Psoas muscle (tissue), 8 donors: ENCODE measurements at regions of chr15 and their contacts with region 1.

Region 1: GRCh38 chr15:90886041-90886614 is 1.8 kb downstream of the FES start:
- DNase-seq: peak; percentile 80 to 88
- ATAC-seq: peak; percentile 56 to 81 (median 70)
- H3K4me3 ChIP-seq: peak overlapping the region; percentile 69
- H3K27ac ChIP-seq: no peak overlapping the region
- H3K4me1 ChIP-seq: peaks cover 12% of the 10 kb centered on the region
- H3K27me3 ChIP-seq: no peaks in the 10 kb centered on the region
- CTCF ChIP-seq: peak; percentile 98

Region 2: DNA sequence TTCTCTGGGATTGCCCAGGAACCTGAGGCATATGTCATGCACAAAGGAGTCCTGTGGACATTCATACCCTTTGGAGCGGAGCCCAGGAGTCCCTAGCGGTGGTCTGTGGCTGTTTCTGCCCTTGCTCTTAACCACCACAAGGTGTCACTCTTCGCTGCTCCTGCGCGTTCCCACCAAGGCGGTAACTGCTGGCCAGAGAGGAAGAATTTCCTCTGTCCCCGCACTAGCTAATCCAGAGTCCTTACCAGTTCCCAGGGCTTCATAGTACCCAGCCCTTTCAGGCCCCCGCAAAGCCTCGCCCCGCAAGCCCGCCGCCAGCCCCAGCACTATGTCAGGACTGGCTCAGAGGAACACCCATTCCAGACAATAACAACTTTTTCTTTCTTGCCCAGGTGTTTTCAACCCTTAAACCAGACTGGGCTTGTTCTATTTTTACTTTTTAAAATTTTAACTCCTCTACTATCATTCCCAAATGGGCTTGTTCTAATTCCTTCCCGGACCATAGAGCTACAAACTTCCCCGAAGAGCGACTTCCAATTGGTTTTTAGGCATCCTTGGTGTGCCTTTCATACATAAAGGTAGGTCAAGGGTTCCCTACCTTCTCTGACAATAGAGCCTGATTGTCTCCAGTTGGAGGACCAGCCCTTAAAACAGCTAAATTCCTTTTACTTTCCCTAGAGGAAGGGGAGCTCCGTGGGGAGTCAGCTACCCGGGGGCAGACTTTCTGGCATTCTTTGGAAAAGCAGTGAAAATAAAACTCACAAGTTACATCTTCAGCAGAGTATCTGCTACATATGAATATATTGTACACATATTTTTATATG is 565.9 kb before region 1 on chr15:
- intact Hi-C with region 1: loop called in 1 of 2 experiments (anchors 5 kb)
- DNase-seq: peak; percentile 78 to 90
- ATAC-seq: peak; percentile 90 to 94 (median 92)
- H3K4me3 ChIP-seq: peak overlapping the region; percentile 42
- H3K27ac ChIP-seq: peak overlapping the region; percentile 27
- H3K4me1 ChIP-seq: peaks cover 19% of the 10 kb centered on the region
- H3K27me3 ChIP-seq: no peaks in the 10 kb centered on the region
- CTCF ChIP-seq: peak; percentile 97

Region 3: GRCh38 chr15:90648137-90649070 is 237.7 kb before region 1 on chr15:
- intact Hi-C with region 1: loop called (anchors 1 to 2 kb)
- DNase-seq: peak; percentile 59 to 67
- ATAC-seq: peak; percentile 77 to 86 (median 80)
- H3K4me3 ChIP-seq: no peak overlapping the region
- H3K27ac ChIP-seq: peak overlapping the region; percentile 60
- H3K4me1 ChIP-seq: no peaks in the 10 kb centered on the region
- H3K27me3 ChIP-seq: no peaks in the 10 kb centered on the region
- CTCF ChIP-seq: peak; percentile 94

Region 4: GRCh38 chr15:90697181-90697580 is 188.9 kb before region 1 on chr15:
- intact Hi-C with region 1: loop called in 1 of 2 experiments (anchors 5 kb)
- DNase-seq: no peak
- ATAC-seq: no peak
- H3K4me3 ChIP-seq: no peak overlapping the region
- H3K27ac ChIP-seq: no peak overlapping the region
- H3K4me1 ChIP-seq: no peaks in the 10 kb centered on the region
- H3K27me3 ChIP-seq: no peaks in the 10 kb centered on the region
- CTCF ChIP-seq: no peak

Region 5: DNA sequence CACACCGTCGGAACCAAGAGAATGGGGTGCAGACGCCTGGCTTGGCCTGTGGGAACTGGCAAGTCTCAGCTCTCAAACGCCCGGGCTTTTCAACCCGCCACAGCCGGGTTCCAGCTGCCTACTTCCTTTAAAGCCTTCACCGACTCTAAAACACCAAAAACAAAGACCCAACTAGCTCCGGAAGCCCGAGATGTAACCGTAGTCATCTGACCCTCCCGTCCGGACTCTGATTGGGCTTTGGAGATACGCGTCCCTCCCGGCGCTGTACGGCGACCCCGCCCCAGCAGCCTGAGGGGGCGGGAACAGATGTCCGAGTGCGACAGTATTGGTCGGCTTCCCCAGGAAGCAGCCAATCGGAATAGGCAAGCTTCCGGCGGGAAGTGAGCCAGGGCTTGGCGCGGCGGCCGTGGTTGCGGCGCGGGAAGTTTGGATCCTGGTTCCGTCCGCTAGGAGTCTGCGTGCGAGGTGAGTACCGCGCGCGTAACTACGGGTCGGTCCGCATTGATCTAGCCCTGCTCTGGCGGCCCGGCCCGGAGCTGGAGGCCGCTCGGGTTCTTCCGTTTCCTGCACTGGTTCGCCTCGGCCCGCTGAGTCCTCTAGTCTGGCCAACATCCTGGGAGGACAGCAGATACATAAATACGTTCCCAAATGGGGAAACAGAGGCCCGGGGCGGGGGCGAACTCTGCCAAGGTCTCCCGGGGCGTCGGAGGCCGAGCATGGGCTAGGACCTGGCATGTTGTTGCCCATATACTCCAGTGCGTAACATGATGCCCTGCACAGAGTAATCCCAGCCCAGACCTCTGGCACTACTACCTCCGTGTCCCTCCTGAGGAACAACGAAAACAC is 168.9 kb before region 1 on chr15 and contains the start of gene BLM:
- intact Hi-C with region 1: loop called in 1 of 2 experiments (anchors 1 kb)
- DNase-seq: peak; percentile 96 to 98
- ATAC-seq: peak; percentile 100
- H3K4me3 ChIP-seq: peak within 1 kb of the TSS; percentile 92
- H3K27ac ChIP-seq: peak within 1 kb of the TSS; percentile 95
- H3K4me1 ChIP-seq: peaks cover 6% of the 10 kb centered on the region
- H3K27me3 ChIP-seq: no peaks in the 10 kb centered on the region
- CTCF ChIP-seq: peak; percentile 46
- total RNA-seq, gene BLM: 0.27 to 2.4 (median 1.4) TPM

Region 6: DNA sequence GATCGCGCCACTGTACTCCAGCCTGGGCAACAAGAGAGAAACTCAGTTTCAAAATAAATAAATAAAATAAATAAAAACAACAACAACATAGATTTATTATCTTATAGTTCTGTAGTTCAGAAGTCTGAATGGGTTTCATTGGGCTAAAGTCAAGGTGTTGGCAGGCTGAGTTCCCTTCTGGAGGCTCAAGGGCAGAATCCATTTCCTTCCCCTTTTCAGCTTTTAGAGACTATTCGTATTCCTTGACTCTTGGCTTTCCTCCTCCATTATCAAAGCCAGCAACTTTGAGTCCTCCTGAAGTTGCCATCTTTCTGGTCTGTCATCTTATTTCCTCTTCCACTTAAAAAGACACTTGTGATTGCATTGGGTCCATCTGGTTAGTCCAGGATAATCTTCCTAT is 156.9 kb before region 1 on chr15:
- intact Hi-C with region 1: no loop called
- DNase-seq: no peak
- ATAC-seq: no peak
- H3K4me3 ChIP-seq: no peak overlapping the region
- H3K27ac ChIP-seq: no peak overlapping the region
- H3K4me1 ChIP-seq: no peaks in the 10 kb centered on the region
- H3K27me3 ChIP-seq: no peaks in the 10 kb centered on the region
- CTCF ChIP-seq: no peak

Region 7: DNA sequence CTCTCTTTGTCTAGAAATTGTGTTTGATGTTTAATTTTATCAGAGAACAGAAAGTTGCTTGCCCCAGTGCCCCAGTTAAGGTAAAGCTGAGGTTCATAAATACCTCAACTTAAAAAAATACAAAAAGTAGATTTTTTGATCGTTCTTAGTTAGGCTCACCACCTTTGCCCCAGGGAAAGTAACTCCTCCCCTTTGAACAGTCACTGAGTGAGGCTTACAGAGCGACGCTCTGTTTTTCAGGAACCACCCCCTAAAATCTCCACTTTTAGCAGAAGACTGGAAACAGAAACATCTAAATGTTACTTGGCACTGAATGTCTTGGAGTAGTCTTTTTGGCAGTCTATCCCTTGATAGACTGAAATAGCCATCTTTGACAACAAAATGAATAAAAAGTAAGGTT is 144.0 kb before region 1 on chr15:
- intact Hi-C with region 1: no loop called
- DNase-seq: no peak
- ATAC-seq: no peak
- H3K4me3 ChIP-seq: no peak overlapping the region
- H3K27ac ChIP-seq: no peak overlapping the region
- H3K4me1 ChIP-seq: no peaks in the 10 kb centered on the region
- H3K27me3 ChIP-seq: no peaks in the 10 kb centered on the region
- CTCF ChIP-seq: no peak

Region 8: GRCh38 chr15:90959894-90960293 is 73.8 kb after region 1 on chr15:
- intact Hi-C with region 1: no loop called
- DNase-seq: peak in 1 of 2 donors; percentile 72
- ATAC-seq: peak; percentile 34 to 70 (median 62)
- H3K4me3 ChIP-seq: no peak overlapping the region
- H3K27ac ChIP-seq: peak overlapping the region; percentile 63
- H3K4me1 ChIP-seq: peaks cover 28% of the 10 kb centered on the region
- H3K27me3 ChIP-seq: no peaks in the 10 kb centered on the region
- CTCF ChIP-seq: no peak